Activated naive CD4-positive, alpha-beta T cell treated with anti-CD3 and anti-CD28 coated beads for 36 hours (primary cell): ENCODE measurements at regions of chr5 and their contacts with region 1.

Region 1: GRCh38 chr5:96934708-96935558 is 947 bp upstream of the LNPEP start:
- DNase-seq: peak; percentile 93
- H3K4me3 Mint-ChIP-seq: peak overlapping the region; percentile 85
- H3K27ac Mint-ChIP-seq: peak overlapping the region; percentile 99
- H3K4me1 Mint-ChIP-seq: peaks cover 51% of the 10 kb centered on the region
- H3K27me3 Mint-ChIP-seq: no peaks in the 10 kb centered on the region

Region 2: DNA sequence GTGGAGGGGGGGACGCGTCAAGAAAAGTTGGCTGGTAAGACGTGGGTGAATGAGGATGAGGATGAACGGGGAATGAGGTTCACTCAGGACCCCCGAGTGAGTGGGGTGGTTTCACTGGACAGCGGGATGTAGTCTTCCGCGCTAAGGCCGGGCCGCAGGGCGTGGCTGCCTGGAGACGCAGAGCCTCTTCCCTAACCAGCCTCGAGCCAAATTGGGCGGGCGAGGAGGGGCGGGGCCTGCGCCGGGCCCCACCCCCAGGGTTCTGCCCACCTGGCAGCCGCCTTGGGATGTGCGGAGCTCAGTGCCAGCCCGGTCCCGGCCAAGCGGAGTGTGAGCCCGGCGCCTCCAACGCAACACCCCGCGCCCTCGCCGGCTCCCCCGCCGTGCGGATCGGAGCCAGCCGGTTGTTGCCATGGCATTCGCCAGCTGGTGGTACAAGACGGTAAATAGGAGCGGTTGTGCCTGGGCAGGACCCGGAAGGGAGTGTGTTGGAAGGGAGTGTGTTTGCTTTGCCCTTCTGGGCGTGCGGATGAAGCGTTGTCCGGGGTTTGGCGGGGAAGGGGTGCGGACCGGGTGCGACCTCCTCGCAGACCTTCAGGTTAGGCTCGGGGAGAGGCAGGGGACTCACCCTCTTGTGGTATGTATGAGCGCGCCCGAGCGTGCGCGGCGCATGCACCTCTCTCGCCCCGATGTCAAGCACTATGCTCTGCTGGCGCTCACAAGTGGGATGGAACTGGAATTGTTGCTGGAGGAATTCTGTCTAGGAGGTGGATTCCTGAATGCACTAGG is 272.0 kb before region 1 on chr5:
- CTCF ChIA-PET with region 1: no interaction called
- intact Hi-C with region 1: loop called (anchors 1 kb)
- DNase-seq: peak; percentile 89
- H3K4me3 Mint-ChIP-seq: peak overlapping the region; percentile 96
- H3K27ac Mint-ChIP-seq: peak overlapping the region; percentile 96
- H3K4me1 Mint-ChIP-seq: peaks cover 22% of the 10 kb centered on the region
- H3K27me3 Mint-ChIP-seq: peaks cover 3% of the 10 kb centered on the region

Region 3: DNA sequence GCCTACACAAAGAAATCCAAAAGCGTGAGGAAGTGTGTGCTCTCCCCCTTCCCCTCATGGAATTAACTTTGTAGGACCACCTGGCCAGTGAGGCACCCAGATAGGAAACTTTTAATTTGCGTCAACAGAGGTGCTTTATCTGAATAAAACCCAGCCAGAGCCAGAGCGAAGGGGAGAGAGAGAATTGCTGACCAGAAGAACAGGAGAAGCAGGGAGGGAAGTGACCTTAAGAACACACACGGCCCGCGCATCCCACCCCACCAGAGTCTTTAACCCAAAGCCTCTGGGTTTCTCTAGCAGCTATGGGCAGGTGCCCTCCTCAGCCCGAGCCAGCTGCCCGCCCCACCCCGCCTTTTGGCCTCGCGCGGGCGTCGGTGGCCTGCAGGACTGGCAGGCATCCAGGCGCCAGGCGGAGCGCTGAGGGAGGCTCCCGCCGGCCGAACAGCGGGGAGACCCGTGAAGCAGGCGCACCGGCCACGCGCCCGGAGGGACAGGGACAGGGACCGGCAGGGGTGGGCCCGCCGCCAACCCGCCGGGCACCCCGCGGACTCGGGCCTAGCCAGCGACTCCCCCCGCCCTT is 127.8 kb before region 1 on chr5:
- CTCF ChIA-PET with region 1: interaction called, 4 read pairs
- intact Hi-C with region 1: loop called (anchors 1 kb)
- DNase-seq: peak; percentile 48
- H3K4me3 Mint-ChIP-seq: peak overlapping the region; percentile 86
- H3K27ac Mint-ChIP-seq: peak overlapping the region; percentile 97
- H3K4me1 Mint-ChIP-seq: peaks cover 80% of the 10 kb centered on the region
- H3K27me3 Mint-ChIP-seq: no peaks in the 10 kb centered on the region

Region 4: GRCh38 chr5:96885518-96886338 is 49.2 kb before region 1 on chr5:
- CTCF ChIA-PET with region 1: no interaction called
- intact Hi-C with region 1: loop called (anchors 1 kb)
- DNase-seq: peak; percentile 61
- H3K4me3 Mint-ChIP-seq: peak overlapping the region; percentile 3
- H3K27ac Mint-ChIP-seq: peak overlapping the region; percentile 88
- H3K4me1 Mint-ChIP-seq: peaks cover 71% of the 10 kb centered on the region
- H3K27me3 Mint-ChIP-seq: no peaks in the 10 kb centered on the region

Region 5: DNA sequence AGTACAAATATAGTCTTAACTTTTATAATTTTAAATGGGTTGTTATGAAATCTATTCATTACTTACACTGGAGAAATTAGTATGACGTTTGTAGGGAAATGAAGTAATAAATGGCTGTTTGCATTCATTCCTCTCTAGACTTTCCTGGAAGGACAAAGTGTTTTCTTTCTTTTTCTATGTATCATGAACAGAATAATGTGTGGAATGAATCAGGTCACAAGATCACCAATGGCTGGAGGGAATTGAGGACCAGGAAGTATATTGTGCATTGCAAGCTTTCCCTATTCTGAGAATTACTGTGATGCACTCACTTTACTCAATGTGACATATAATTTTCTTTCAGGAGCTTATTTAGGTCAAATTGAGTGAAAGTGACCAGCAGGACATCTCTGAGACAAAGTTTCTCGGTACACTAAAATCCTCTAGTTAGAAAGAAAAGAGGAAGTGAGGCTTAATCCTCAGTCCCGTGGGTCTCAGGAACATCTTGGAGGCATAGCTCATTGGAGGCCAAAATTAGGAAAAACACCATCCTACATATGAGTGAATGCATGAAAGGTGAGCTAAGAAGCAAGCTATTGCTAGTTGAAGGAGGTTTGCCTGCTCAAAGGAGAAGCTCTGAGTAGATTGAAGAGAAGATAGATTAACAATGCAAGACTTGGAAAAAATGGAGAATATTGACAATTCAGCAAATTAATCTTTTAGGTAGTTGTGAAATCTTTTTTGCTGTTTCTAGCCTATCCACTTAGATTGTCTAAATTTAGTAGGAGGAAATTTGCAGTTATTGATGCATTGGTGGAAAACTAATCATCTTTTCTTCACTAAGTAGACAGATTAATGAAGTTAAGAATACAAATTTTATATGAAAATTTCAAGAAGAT is 30.6 kb before region 1 on chr5:
- CTCF ChIA-PET with region 1: no interaction called
- intact Hi-C with region 1: no loop called
- DNase-seq: no peak
- H3K4me3 Mint-ChIP-seq: no peak overlapping the region
- H3K27ac Mint-ChIP-seq: no peak overlapping the region
- H3K4me1 Mint-ChIP-seq: peaks cover 26% of the 10 kb centered on the region
- H3K27me3 Mint-ChIP-seq: no peaks in the 10 kb centered on the region

Region 6: GRCh38 chr5:96946381-96946780 is 11.4 kb after region 1 on chr5:
- CTCF ChIA-PET with region 1: no interaction called
- intact Hi-C with region 1: loop called (anchors 1 kb)
- DNase-seq: no peak
- H3K4me3 Mint-ChIP-seq: no peak overlapping the region
- H3K27ac Mint-ChIP-seq: no peak overlapping the region
- H3K4me1 Mint-ChIP-seq: peaks cover 61% of the 10 kb centered on the region
- H3K27me3 Mint-ChIP-seq: no peaks in the 10 kb centered on the region

Region 7: DNA sequence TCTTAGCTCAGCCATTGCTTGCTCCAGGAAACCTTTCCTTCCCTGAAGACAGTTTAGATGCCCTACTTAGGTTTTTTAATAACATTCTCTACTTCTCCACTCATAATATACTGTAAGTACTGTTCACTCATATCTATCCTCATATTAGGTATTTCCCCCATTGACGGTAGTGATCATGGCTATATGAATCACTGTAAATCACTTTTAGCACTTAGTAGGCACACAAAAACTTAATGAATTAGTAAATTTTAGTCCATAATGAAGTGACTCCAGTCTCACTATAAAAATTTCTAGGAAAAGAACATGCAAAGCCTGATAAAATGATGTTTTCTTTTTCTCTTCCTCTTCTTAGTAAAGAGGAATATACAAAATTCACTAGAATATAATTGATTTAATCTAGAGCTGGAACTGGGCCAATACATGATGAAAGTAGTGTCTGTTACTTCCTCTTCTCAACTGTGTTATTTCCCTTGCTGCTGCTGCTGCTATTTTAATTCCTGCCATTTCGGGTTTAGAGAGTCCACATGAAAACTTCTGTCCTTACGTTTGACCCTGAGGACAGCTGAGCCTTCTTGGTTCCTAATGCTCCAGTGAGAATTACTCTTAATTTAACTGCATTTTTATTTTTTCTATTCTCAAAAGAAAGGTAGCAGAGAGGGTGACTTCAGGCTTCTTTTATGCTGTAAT is 74.4 kb after region 1 on chr5:
- CTCF ChIA-PET with region 1: no interaction called
- intact Hi-C with region 1: loop called (anchors 1 kb)
- DNase-seq: no peak
- H3K4me3 Mint-ChIP-seq: no peak overlapping the region
- H3K27ac Mint-ChIP-seq: peak overlapping the region; percentile 62
- H3K4me1 Mint-ChIP-seq: peaks cover 18% of the 10 kb centered on the region
- H3K27me3 Mint-ChIP-seq: no peaks in the 10 kb centered on the region

Region 8: GRCh38 chr5:97131139-97131710 is 196.3 kb after region 1 on chr5:
- CTCF ChIA-PET with region 1: no interaction called
- intact Hi-C with region 1: no loop called
- DNase-seq: no peak
- H3K4me3 Mint-ChIP-seq: no peak overlapping the region
- H3K27ac Mint-ChIP-seq: no peak overlapping the region
- H3K4me1 Mint-ChIP-seq: peaks cover 5% of the 10 kb centered on the region
- H3K27me3 Mint-ChIP-seq: peaks cover 5% of the 10 kb centered on the region

Region 9: DNA sequence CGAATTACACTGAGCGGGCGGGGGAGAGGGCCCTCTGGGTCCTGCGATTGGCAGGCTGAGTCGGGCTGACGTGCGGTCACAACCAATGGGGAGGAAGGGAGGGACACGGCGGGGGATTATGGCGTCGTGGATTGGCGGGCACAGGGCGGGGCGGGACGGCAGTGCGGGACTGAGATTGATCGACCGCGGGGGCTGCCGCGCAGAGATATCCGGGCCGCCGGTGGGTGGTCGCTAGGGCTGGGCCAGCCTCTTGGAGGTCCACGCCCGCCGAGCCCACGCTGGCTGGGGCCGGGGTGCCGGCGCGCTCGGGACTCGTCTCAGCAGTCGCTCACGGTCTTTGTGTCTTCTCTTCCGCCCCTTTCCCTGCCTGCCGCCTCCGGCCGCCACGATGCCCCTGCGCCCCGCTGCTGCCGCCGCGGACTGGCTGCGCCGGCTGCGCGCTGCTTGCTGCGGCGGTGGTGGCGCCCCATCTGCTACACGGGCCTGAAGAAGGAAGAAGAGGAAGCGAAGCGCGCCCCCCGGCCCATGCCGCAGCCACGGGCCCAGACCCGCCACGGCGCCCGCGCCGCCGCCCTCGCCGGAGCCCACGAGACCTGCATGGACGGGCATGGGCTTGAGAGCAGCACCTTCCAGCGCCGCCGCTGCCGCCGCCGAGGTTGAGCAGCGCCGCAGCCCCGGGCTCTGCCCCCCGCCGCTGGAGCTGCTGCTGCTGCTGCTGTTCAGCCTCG is 1838.7 kb after region 1 on chr5 and contains the start of gene RGMB:
- CTCF ChIA-PET with region 1: no interaction called
- intact Hi-C with region 1: loop called (anchors 1 kb)
- DNase-seq: peak; percentile 96
- H3K4me3 Mint-ChIP-seq: peak within 1 kb of the TSS; percentile 99
- H3K27ac Mint-ChIP-seq: peak within 1 kb of the TSS; percentile 77
- H3K4me1 Mint-ChIP-seq: peaks cover 36% of the 10 kb centered on the region
- H3K27me3 Mint-ChIP-seq: peaks cover 10% of the 10 kb centered on the region
- total RNA-seq, gene RGMB: 5.0 to 5.9 TPM